Esophagus muscularis mucosa (tissue), 4 donors: ENCODE measurements at regions of chr4 and their contacts with region 1.

Region 1: GRCh38 chr4:55546756-55547465 is at the start of gene CLOCK:
- DNase-seq: peak; percentile 96
- H3K4me3 ChIP-seq: peak within 1 kb of the TSS; percentile 92 to 100 (median 96)
- H3K27ac ChIP-seq: peak within 1 kb of the TSS; percentile 98 to 100 (median 98)
- H3K4me1 ChIP-seq: peaks cover 8 to 34% (median 21%) of the 10 kb centered on the region in 4 donors
- H3K27me3 ChIP-seq: no peaks in the 10 kb centered on the region
- CTCF ChIP-seq: peak in 2 of 3 experiments; percentile 36 to 56
- EP300 ChIP-seq: no peak
- POLR2A ChIP-seq: peak; percentile 47
- total RNA-seq, gene CLOCK: 24.5 to 42.6 (median 34.8) TPM

Region 2: GRCh38 chr4:55345980-55346850 is 200.7 kb before region 1 on chr4 and contains the start of gene SRD5A3:
- intact Hi-C with region 1: loop called (anchors 5 kb)
- DNase-seq: peak; percentile 93
- H3K4me3 ChIP-seq: peak within 1 kb of the TSS; percentile 70 to 84 (median 78)
- H3K27ac ChIP-seq: peak within 1 kb of the TSS; percentile 93 to 98 (median 96)
- H3K4me1 ChIP-seq: peaks cover 19 to 37% (median 29%) of the 10 kb centered on the region in 4 donors
- H3K27me3 ChIP-seq: no peaks in the 10 kb centered on the region
- CTCF ChIP-seq: peak; percentile 87 to 96 (median 94)
- EP300 ChIP-seq: no peak
- POLR2A ChIP-seq: no peak
- total RNA-seq, gene SRD5A3: 3.0 to 7.9 (median 5.2) TPM

Region 3: GRCh38 chr4:55395529-55396307 is 151.2 kb before region 1 on chr4 and contains the start of gene TMEM165:
- intact Hi-C with region 1: loop called (anchors 5 kb)
- DNase-seq: peak; percentile 96
- H3K4me3 ChIP-seq: peak within 1 kb of the TSS; percentile 88 to 100 (median 96)
- H3K27ac ChIP-seq: peak within 1 kb of the TSS; percentile 94 to 100 (median 100)
- H3K4me1 ChIP-seq: peaks cover 25 to 41% (median 39%) of the 10 kb centered on the region in 4 donors
- H3K27me3 ChIP-seq: no peaks in the 10 kb centered on the region
- CTCF ChIP-seq: peak in 1 of 3 experiments; percentile 17
- EP300 ChIP-seq: no peak
- POLR2A ChIP-seq: peak; percentile 97
- total RNA-seq, gene TMEM165: 133 to 193 (median 168) TPM

Region 4: DNA sequence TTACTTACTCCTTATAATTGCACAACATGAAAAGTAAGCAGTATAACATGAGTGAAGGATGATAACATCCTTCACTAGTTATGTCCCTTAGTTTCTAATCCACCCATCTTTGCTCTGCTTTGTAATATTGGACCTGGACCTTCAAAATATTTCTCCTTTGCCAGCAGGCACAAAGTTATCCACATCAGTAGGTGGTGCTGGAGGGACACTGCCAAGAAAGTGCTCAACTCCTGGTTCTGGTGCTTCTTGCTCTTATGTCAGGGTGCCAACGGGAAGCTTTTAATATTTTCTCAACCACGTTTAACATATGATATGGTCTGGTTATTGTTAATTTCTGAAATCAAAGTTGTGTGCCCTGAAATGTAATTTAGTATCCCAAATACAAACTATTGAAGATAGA is 102.1 kb before region 1 on chr4:
- intact Hi-C with region 1: loop called (anchors 5 kb)
- DNase-seq: no peak
- H3K4me3 ChIP-seq: no peak overlapping the region
- H3K27ac ChIP-seq: no peak overlapping the region
- H3K4me1 ChIP-seq: peaks cover 0 to 6% (median 0%) of the 10 kb centered on the region in 4 donors
- H3K27me3 ChIP-seq: no peaks in the 10 kb centered on the region
- CTCF ChIP-seq: peak; percentile 8 to 22 (median 19)
- EP300 ChIP-seq: no peak
- POLR2A ChIP-seq: no peak

Region 5: DNA sequence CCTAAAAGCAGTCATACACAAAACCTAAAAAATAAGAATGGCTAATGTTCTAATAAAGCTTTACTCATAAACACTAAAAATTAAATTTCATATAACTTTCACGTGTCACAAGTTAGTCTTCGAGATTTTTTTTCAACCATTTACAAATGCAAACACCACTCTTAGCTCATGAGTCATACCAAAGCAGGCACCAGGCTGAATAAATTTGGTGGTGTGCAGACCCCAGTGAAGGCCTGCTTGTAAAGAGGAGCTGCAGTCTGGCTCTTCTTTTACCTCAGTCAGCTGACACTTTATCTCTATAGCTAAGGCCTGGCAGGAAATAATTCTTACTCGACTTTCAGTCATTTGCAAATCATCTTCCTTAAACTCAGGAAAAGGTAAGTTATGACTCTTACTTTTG is 37.6 kb before region 1 on chr4:
- intact Hi-C with region 1: no loop called
- DNase-seq: no peak
- H3K4me3 ChIP-seq: no peak overlapping the region
- H3K27ac ChIP-seq: no peak overlapping the region
- H3K4me1 ChIP-seq: peaks cover 0 to 9% (median 4%) of the 10 kb centered on the region in 4 donors
- H3K27me3 ChIP-seq: no peaks in the 10 kb centered on the region
- CTCF ChIP-seq: no peak
- EP300 ChIP-seq: no peak
- POLR2A ChIP-seq: no peak

Region 6: GRCh38 chr4:55729929-55730577 is 183.1 kb after region 1 on chr4:
- intact Hi-C with region 1: no loop called
- DNase-seq: no peak
- H3K4me3 ChIP-seq: no peak overlapping the region
- H3K27ac ChIP-seq: no peak overlapping the region
- H3K4me1 ChIP-seq: no peaks in the 10 kb centered on the region
- H3K27me3 ChIP-seq: peaks cover 0 to 6% (median 0%) of the 10 kb centered on the region in 4 donors
- CTCF ChIP-seq: no peak
- EP300 ChIP-seq: no peak
- POLR2A ChIP-seq: no peak

Region 7: DNA sequence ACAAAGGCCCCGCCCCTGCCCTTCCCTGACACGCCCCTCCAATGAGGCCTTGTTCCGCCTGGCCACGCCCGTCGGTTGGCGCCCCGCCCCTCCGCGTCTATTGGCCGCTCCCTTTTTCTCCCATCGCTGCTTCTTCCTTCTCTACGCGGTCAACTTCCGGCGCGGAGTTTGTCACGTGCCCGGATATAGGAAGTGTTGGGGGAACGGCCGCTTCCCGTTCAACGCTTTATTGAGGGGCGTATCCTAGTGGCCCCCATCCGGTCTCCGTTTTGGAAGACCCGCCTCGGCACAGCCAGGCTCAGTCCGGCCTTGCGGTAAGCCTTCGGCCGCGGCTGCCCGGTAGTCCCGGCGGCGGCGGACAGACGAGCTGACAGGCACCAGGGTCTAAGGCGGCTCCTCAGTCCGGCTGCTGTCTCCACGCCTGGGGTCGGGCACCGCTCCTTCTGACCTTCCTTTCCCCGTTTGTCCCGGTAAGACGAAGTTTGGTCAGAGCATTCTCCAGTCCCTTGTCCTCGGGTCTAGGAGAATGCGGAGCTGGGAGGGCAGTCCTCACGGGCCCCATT is 306.7 kb after region 1 on chr4 and contains the start of gene EXOC1:
- intact Hi-C with region 1: loop called (anchors 5 kb)
- DNase-seq: peak; percentile 99
- H3K4me3 ChIP-seq: peak within 1 kb of the TSS; percentile 80 to 98 (median 88)
- H3K27ac ChIP-seq: peak within 1 kb of the TSS; percentile 83 to 91 (median 88)
- H3K4me1 ChIP-seq: peaks cover 17 to 30% (median 21%) of the 10 kb centered on the region in 4 donors
- H3K27me3 ChIP-seq: peaks cover 0 to 8% (median 0%) of the 10 kb centered on the region in 4 donors
- CTCF ChIP-seq: no peak
- EP300 ChIP-seq: no peak
- POLR2A ChIP-seq: no peak
- total RNA-seq, gene EXOC1: 22.0 to 33.6 (median 23.6) TPM

Region 8: GRCh38 chr4:55931833-55932232 is 384.9 kb after region 1 on chr4:
- intact Hi-C with region 1: no loop called
- DNase-seq: no peak
- H3K4me3 ChIP-seq: no peak overlapping the region
- H3K27ac ChIP-seq: no peak overlapping the region
- H3K4me1 ChIP-seq: no peaks in the 10 kb centered on the region
- H3K27me3 ChIP-seq: no peaks in the 10 kb centered on the region
- CTCF ChIP-seq: no peak
- EP300 ChIP-seq: no peak
- POLR2A ChIP-seq: no peak

Region 9: DNA sequence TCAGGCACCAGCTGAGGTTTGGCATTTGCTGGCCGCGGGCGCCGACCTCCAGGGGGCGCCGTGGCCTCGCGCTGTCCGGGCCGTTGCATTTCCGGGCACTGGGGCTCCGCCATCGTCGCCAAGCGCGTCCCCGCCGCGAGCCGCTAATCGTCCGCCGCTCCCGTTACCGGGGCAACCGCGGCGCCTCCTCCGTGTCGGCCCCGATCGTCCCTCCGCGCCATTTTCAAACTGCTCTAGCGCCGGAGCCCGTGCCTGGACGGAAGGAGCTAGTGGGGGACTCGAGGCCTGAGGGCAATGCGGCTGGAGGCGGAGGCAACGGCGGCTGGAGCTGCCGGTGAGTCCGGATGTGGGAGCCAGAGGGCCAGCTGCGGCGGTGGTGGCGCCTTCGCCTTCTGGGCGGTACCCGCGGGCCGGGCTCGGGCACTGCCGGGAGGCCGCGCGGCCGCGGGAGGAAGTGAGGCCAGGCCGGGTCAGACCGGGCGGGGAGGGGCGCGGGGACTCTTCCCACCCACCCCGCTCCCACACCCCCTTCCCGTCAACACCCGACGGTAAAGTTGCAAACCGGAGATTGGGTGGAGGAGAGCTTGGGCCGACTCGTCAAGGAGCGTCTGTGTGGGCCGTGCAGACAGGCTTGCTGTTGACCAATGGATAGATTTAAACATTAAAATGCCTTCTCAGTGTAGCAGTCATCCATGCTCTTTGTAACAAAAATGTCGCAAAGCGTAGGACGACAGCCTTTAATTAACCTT is 402.0 kb after region 1 on chr4 and contains the start of gene CEP135:
- intact Hi-C with region 1: no loop called
- DNase-seq: peak; percentile 97
- H3K4me3 ChIP-seq: peak within 1 kb of the TSS; percentile 81 to 86 (median 84)
- H3K27ac ChIP-seq: peak within 1 kb of the TSS; percentile 86 to 91 (median 88)
- H3K4me1 ChIP-seq: peaks cover 15 to 28% (median 23%) of the 10 kb centered on the region in 4 donors
- H3K27me3 ChIP-seq: no peaks in the 10 kb centered on the region
- CTCF ChIP-seq: peak; percentile 83 to 95 (median 93)
- EP300 ChIP-seq: no peak
- POLR2A ChIP-seq: no peak
- total RNA-seq, gene CEP135: 3.5 to 5.0 (median 3.8) TPM